ENCODE measurements at regions of chr9 and their contacts with region 1.

Region 1: DNA sequence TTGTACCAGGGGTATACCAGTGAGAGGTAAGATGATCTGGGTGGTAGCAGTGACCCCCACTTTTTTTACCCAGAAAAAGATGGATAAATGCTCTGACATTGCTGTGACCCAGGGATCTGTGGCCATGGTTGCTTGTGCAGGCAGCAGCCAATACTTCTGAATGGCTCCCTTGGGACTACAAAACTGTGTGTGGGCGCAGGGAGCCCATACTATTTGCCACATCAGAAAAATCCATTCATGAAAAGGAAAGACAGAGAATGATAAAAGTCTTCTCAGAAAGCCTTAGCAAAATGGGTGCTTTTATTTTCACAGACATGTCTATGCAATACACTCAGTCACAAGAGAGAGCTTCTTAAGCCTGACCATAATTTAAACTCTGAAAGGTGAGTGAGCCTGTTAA is 37.3 kb upstream of the ALDOB start:
- DNase-seq: no peak
- H3K4me3 Mint-ChIP-seq: no peak overlapping the region
- H3K27ac Mint-ChIP-seq: no peak overlapping the region
- H3K4me1 Mint-ChIP-seq: peaks cover 15% of the 10 kb centered on the region
- H3K27me3 Mint-ChIP-seq: no peaks in the 10 kb centered on the region
- CTCF ChIP-seq: no peak

Region 2: DNA sequence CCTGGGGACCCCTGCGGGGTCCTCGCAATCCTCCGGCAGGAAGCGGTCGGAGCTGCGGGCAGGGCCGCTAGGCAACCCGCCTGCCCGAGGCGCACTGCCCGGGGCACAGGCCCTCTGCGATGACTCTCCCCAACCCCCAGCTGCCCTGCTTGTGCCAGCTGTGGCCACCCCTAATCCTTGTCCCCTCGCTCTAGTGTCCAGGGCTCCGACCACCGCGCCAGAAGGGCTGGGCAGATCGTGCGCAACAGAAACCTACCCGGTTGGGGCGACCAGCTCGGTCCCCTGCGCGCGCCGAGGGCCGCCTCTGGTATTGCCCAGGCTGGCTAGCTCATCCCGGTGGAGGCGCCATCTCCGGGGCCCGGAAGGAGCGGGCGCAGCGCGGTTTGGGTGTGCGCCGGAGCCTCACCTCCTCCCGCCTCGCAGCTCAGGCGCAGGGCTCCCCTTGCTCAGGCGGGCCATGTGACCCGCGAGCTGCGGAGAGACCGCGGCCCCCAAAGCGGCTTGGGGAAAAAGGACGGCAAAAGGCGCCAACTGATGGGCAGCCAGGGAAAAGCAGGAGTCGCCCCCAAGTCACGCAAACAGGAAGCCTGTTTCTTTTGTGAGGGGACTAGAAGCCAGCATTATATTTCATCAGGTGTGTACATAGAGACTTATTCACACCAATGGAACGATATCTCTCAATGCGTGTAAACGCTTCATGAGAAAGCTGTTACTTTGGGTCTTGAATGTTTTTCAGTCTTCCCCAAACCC is 14.0 kb after region 1 on chr9:
- CTCF ChIA-PET with region 1: interaction called, 145 read pairs
- POLR2A ChIA-PET with region 1: interaction called, 92 read pairs
- intact Hi-C with region 1: no loop called
- DNase-seq: peak; percentile 71
- H3K4me3 Mint-ChIP-seq: peak overlapping the region; percentile 82
- H3K27ac Mint-ChIP-seq: peak overlapping the region; percentile 92
- H3K4me1 Mint-ChIP-seq: peaks cover 25% of the 10 kb centered on the region
- H3K27me3 Mint-ChIP-seq: no peaks in the 10 kb centered on the region
- CTCF ChIP-seq: peak; percentile 4

Region 3: DNA sequence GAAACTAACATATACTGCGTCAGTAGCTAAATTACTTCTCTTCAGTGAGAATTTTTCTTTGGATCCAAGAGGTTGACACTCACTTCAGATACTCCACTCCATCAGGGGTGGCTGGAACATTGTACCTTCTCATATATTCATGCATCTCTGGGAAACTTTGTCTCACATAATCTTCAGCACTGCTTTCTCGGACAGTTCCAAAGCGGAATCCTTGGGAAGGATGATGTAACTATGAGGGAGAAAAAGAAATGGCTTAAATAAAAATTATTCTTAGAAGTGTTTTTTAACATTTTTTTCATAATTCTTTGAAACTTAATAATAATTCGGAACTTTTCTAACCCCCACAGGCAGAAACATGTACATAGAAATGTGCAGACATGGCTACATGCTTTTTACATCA is 155.3 kb after region 1 on chr9:
- CTCF ChIA-PET with region 1: no interaction called
- POLR2A ChIA-PET with region 1: no interaction called
- intact Hi-C with region 1: no loop called
- DNase-seq: peak; percentile 54
- H3K4me3 Mint-ChIP-seq: no peak overlapping the region
- H3K27ac Mint-ChIP-seq: no peak overlapping the region
- H3K4me1 Mint-ChIP-seq: no peaks in the 10 kb centered on the region
- H3K27me3 Mint-ChIP-seq: peaks cover 15% of the 10 kb centered on the region
- CTCF ChIP-seq: no peak

Measured in MCF 10A (cell line).